CD8-positive, alpha-beta T cell (primary cell): ENCODE measurements at regions of chr12 and their contacts with region 1.

Region 1: DNA sequence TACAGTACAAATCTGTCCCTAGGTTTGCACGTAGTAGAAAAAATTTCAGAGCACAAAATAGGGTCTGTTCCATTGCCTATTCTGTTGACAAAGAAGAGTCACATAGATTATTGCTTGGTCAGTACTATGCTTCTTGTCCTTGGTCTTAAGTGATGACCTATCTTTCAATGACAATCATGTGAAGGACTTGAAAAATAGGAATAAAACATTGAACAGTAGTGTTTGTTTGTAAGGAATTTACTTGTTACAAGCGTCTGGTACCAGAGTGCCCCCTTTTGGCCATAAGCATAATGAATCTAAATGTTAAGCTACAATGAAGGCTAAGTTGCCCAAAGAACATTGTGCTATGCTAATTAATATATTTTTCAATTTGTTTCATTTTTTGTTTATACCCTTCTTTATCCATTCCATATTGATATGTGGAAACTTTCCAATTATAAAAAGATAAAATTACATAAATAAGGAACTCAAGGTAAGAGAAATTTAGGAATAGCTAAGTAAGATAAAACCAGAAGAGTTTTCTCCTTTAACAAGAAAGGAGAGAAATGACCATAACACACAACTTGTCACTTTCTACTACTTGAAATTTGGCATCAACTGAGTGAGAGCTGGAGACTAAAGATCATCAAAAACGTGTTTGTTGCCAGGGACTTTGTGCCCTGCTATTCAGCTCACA is 204.7 kb downstream of the EPS8 start:
- DNase-seq: peak in 4 of 9 experiments; percentile 16 to 77 (median 53)
- ATAC-seq: peak; percentile 52
- H3K4me3 ChIP-seq: no peak overlapping the region
- H3K4me3 Mint-ChIP-seq: no peak overlapping the region
- H3K27ac ChIP-seq: no peak overlapping the region
- H3K27ac Mint-ChIP-seq: no peak overlapping the region
- H3K4me1 ChIP-seq: no peaks in the 10 kb centered on the region
- H3K4me1 Mint-ChIP-seq: peaks cover 4% of the 10 kb centered on the region
- H3K27me3 ChIP-seq: peaks cover 0 to 3% of the 10 kb centered on the region in 2 experiments
- H3K27me3 Mint-ChIP-seq: no peaks in the 10 kb centered on the region
- CTCF ChIP-seq: peak; percentile 77

Region 2: DNA sequence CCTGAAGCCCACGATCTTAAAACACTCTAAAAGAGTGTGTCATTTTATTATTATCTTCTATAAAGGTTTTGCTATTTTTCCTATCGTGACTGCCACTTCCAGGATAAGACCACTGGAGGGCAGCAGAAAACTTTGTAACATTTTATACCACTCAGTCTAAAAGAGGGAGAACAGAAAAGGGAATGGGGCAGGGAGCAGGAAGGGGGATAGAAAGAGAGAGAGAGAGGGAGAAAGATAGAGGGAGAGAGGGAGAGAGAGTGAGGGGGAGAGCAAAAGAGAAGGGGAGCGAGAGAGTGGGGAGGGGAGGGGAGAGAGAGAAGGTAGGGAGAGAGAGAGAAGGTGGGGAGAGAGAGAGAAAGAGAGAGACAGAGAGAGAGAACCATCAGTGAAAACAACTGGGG is 739.2 kb before region 1 on chr12:
- CTCF ChIA-PET with region 1: no interaction called
- POLR2A ChIA-PET with region 1: no interaction called
- intact Hi-C with region 1: loop called in 1 of 2 experiments (anchors 10 kb)
- DNase-seq: peak; percentile 7 to 73 (median 39)
- ATAC-seq: peak; percentile 71
- H3K4me3 ChIP-seq: no peak overlapping the region
- H3K4me3 Mint-ChIP-seq: no peak overlapping the region
- H3K27ac ChIP-seq: no peak overlapping the region
- H3K27ac Mint-ChIP-seq: no peak overlapping the region
- H3K4me1 ChIP-seq: peaks cover 9% of the 10 kb centered on the region
- H3K4me1 Mint-ChIP-seq: peaks cover 8% of the 10 kb centered on the region
- H3K27me3 ChIP-seq: no peaks in the 10 kb centered on the region
- H3K27me3 Mint-ChIP-seq: no peaks in the 10 kb centered on the region
- CTCF ChIP-seq: peak; percentile 88

Region 3: DNA sequence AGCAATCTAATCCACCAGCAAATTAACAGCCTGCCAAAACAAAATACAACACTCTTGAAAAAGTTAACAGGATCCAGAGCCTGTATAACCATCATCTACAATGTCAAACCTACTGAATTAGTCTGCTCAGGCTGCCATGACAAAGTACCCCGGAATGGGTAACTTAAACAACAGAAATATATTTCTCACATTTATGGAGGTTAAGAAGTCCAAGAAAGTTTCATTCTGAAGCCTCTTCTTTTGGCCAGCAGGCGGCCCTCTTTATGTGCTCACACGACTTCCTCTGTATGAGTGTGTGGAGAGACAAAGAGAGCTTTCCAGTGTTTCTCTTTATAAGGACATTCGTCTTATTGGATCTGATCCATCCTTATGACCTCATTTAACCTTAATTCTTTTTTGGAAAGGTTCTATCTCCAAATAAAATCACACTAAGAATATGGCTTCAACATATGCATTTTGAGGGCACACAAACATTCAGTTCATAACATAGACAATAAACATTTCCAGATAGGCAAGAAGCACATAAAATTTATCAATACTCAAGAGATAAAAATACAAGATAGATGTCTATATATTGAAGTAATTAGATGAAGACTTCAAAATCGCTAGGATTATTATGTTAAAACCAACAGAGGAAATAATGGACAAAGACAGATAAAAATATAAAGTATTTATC is 357.4 kb before region 1 on chr12:
- CTCF ChIA-PET with region 1: interaction called, 4 read pairs
- POLR2A ChIA-PET with region 1: no interaction called
- intact Hi-C with region 1: loop called (anchors 5 kb)
- DNase-seq: peak in 4 of 9 experiments; percentile 10 to 30 (median 26)
- ATAC-seq: no peak
- H3K4me3 ChIP-seq: no peak overlapping the region
- H3K4me3 Mint-ChIP-seq: no peak overlapping the region
- H3K27ac ChIP-seq: no peak overlapping the region
- H3K27ac Mint-ChIP-seq: no peak overlapping the region
- H3K4me1 ChIP-seq: no peaks in the 10 kb centered on the region
- H3K4me1 Mint-ChIP-seq: peaks cover 3% of the 10 kb centered on the region
- H3K27me3 ChIP-seq: peaks cover 0 to 3% of the 10 kb centered on the region in 2 experiments
- H3K27me3 Mint-ChIP-seq: peaks cover 36% of the 10 kb centered on the region
- CTCF ChIP-seq: peak; percentile 51

Region 4: GRCh38 chr12:15364221-15365160 is 220.0 kb before region 1 on chr12:
- CTCF ChIA-PET with region 1: no interaction called
- POLR2A ChIA-PET with region 1: no interaction called
- intact Hi-C with region 1: no loop called
- DNase-seq: no peak
- ATAC-seq: no peak
- H3K4me3 ChIP-seq: no peak overlapping the region
- H3K4me3 Mint-ChIP-seq: no peak overlapping the region
- H3K27ac ChIP-seq: no peak overlapping the region
- H3K27ac Mint-ChIP-seq: no peak overlapping the region
- H3K4me1 ChIP-seq: no peaks in the 10 kb centered on the region
- H3K4me1 Mint-ChIP-seq: no peaks in the 10 kb centered on the region
- H3K27me3 ChIP-seq: peaks cover 0 to 3% of the 10 kb centered on the region in 2 experiments
- H3K27me3 Mint-ChIP-seq: peaks cover 9% of the 10 kb centered on the region
- CTCF ChIP-seq: no peak

Region 5: GRCh38 chr12:15522565-15523187 is 61.8 kb before region 1 on chr12:
- CTCF ChIA-PET with region 1: interaction called, 11 read pairs
- POLR2A ChIA-PET with region 1: no interaction called
- intact Hi-C with region 1: no loop called
- DNase-seq: peak in 2 of 9 experiments; percentile 19 to 24
- ATAC-seq: no peak
- H3K4me3 ChIP-seq: no peak overlapping the region
- H3K4me3 Mint-ChIP-seq: no peak overlapping the region
- H3K27ac ChIP-seq: no peak overlapping the region
- H3K27ac Mint-ChIP-seq: no peak overlapping the region
- H3K4me1 ChIP-seq: no peaks in the 10 kb centered on the region
- H3K4me1 Mint-ChIP-seq: peaks cover 2% of the 10 kb centered on the region
- H3K27me3 ChIP-seq: no peaks in the 10 kb centered on the region
- H3K27me3 Mint-ChIP-seq: peaks cover 30% of the 10 kb centered on the region
- CTCF ChIP-seq: no peak

Region 6: GRCh38 chr12:15546102-15546701 is 38.3 kb before region 1 on chr12:
- CTCF ChIA-PET with region 1: interaction called, 26 read pairs
- POLR2A ChIA-PET with region 1: interaction called, 3 read pairs
- intact Hi-C with region 1: no loop called
- DNase-seq: peak in 5 of 9 experiments; percentile 20 to 77 (median 56)
- ATAC-seq: peak; percentile 92
- H3K4me3 ChIP-seq: no peak overlapping the region
- H3K4me3 Mint-ChIP-seq: peak overlapping the region; percentile 62
- H3K27ac ChIP-seq: peak overlapping the region; percentile 57 to 61
- H3K27ac Mint-ChIP-seq: peak overlapping the region; percentile 97
- H3K4me1 ChIP-seq: peaks cover 39% of the 10 kb centered on the region
- H3K4me1 Mint-ChIP-seq: peaks cover 40% of the 10 kb centered on the region
- H3K27me3 ChIP-seq: no peaks in the 10 kb centered on the region
- H3K27me3 Mint-ChIP-seq: no peaks in the 10 kb centered on the region
- CTCF ChIP-seq: no peak

Region 7: DNA sequence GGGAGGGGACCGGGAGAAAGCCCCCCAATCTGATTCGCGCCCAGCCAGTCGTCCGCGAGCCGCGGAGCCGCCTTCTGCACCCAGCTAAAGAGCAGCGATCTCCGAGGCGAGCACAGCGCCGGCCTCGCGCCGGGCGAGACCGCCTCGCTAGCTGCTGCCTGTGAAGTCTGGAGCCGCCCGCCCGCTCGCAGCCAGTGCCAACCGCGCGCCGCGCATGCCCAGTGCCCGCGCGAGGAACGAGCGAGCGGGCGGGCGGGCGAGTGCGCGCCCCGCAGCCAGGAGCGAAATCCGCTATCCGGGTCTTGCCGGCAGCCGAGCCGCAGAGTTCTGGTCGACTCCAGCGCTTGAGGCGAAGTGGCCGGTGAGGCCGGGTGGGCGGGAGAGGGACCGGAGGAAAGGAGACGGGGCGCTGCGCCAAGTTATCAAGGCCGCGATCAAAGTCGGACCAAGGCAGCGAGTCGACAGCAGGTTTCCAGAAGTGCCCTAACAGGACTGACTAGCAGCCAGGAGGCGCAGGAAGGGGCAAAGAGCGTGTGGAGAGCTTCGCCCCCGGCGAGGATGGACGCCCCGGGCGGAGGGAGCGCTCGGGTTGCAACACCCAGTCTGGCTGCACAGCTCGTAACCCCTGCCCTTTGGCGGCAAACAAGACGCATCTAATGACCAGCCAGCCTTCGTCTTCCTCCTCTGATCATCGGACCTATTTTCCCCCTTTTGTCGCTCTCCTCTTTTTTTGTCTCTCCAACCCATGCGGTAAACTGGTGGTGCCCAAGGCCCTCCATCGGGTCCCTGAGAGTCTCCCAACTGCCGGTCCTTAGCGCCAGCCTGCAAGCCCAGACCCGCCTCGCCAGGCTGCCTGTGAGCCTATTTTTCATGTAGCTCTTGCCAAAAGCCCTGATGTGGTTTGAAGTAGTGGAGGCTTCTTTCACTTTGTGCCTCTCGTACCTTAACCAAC is 205.0 kb after region 1 on chr12 and contains the start of gene EPS8:
- CTCF ChIA-PET with region 1: interaction called, 3 read pairs
- POLR2A ChIA-PET with region 1: no interaction called
- intact Hi-C with region 1: loop called in 1 of 2 experiments (anchors 10 kb)
- DNase-seq: peak; percentile 76 to 93 (median 87)
- ATAC-seq: peak; percentile 88
- H3K4me3 ChIP-seq: peak within 1 kb of the TSS; percentile 68 to 87
- H3K4me3 Mint-ChIP-seq: peak within 1 kb of the TSS; percentile 97
- H3K27ac ChIP-seq: peak within 1 kb of the TSS in 1 of 2 experiments; percentile 41
- H3K27ac Mint-ChIP-seq: peak within 1 kb of the TSS; percentile 42
- H3K4me1 ChIP-seq: peaks cover 8% of the 10 kb centered on the region
- H3K4me1 Mint-ChIP-seq: peaks cover 14% of the 10 kb centered on the region
- H3K27me3 ChIP-seq: peaks cover 8 to 15% of the 10 kb centered on the region in 2 experiments
- H3K27me3 Mint-ChIP-seq: peaks cover 39% of the 10 kb centered on the region
- CTCF ChIP-seq: no peak
- total RNA-seq, gene EPS8: 1.7 to 2.1 TPM